Activated CD8-positive, alpha-beta T cell treated with anti-CD3 and anti-CD28 coated beads for 36 hours (primary cell): ENCODE measurements at regions of chr1 and their contacts with region 1.

Region 1: GRCh38 chr1:181497870-181498269 is 14.6 kb downstream of the CACNA1E start:
- DNase-seq: no peak
- ATAC-seq: peak; percentile 47
- H3K4me3 Mint-ChIP-seq: no peak overlapping the region
- H3K27ac Mint-ChIP-seq: no peak overlapping the region
- H3K4me1 Mint-ChIP-seq: no peaks in the 10 kb centered on the region
- H3K27me3 Mint-ChIP-seq: peaks cover 29% of the 10 kb centered on the region
- CTCF ChIP-seq: no peak

Region 2: GRCh38 chr1:181390410-181391077 is 107.3 kb before region 1 on chr1:
- CTCF ChIA-PET with region 1: no interaction called
- POLR2A ChIA-PET with region 1: no interaction called
- intact Hi-C with region 1: no loop called
- DNase-seq: no peak
- ATAC-seq: no peak
- H3K4me3 Mint-ChIP-seq: no peak overlapping the region
- H3K27ac Mint-ChIP-seq: no peak overlapping the region
- H3K4me1 Mint-ChIP-seq: peaks cover 18% of the 10 kb centered on the region
- H3K27me3 Mint-ChIP-seq: no peaks in the 10 kb centered on the region
- CTCF ChIP-seq: no peak

Region 3: DNA sequence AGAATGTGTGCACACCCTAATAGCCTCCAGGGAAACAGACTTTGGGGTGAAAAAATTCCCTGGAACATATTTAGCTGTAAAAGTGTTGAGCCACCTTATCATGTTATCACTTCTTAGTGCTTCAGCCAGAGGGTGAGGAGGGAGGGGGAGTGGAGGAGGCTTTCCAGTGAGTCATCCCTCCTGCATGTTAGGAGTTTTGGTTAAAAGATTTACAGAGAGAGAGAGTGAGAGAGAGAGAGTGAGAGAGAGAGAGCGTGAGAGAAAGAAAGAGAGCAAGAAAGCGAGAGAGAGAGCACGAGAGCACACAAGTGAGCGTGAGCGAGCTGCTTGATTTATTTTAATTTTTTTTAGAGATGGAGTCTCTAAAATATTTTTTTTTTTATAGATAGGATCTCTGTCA is 28.0 kb before region 1 on chr1:
- CTCF ChIA-PET with region 1: no interaction called
- POLR2A ChIA-PET with region 1: no interaction called
- intact Hi-C with region 1: no loop called
- DNase-seq: no peak
- ATAC-seq: no peak
- H3K4me3 Mint-ChIP-seq: no peak overlapping the region
- H3K27ac Mint-ChIP-seq: no peak overlapping the region
- H3K4me1 Mint-ChIP-seq: no peaks in the 10 kb centered on the region
- H3K27me3 Mint-ChIP-seq: peaks cover 23% of the 10 kb centered on the region
- CTCF ChIP-seq: no peak

Region 4: GRCh38 chr1:182069028-182069466 is 571.2 kb after region 1 on chr1:
- CTCF ChIA-PET with region 1: no interaction called
- POLR2A ChIA-PET with region 1: no interaction called
- intact Hi-C with region 1: loop called (anchors 10 kb)
- DNase-seq: peak; percentile 43
- ATAC-seq: peak; percentile 89
- H3K4me3 Mint-ChIP-seq: no peak overlapping the region
- H3K27ac Mint-ChIP-seq: no peak overlapping the region
- H3K4me1 Mint-ChIP-seq: peaks cover 2% of the 10 kb centered on the region
- H3K27me3 Mint-ChIP-seq: peaks cover 15% of the 10 kb centered on the region
- CTCF ChIP-seq: peak; percentile 51